Mammary epithelial cell (primary cell): ENCODE measurements at regions of chr4 and their contacts with region 1.

Region 1: DNA sequence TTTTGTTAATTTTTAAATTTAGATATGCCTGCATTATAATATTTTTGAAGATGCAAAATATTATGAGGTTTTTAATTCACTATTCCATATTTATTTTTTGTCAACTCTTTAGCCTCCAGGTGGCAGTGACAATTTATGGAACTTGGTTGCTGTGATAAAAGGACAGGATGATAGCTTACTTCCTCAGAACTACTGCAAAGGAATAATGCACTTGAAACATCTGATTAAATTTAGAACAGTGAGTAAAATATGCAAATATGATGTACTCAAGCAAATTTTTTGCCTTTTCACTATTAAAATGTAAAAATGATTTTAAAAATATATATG is 45.1 kb downstream of the SPATA4 start:
- DNase-seq: peak; percentile 11
- H3K4me3 ChIP-seq: no peak overlapping the region
- H3K27ac ChIP-seq: no peak overlapping the region
- H3K4me1 ChIP-seq: no peaks in the 10 kb centered on the region
- H3K27me3 ChIP-seq: no peaks in the 10 kb centered on the region
- CTCF ChIP-seq: peak in 1 of 2 donors; percentile 52

Region 2: GRCh38 chr4:176065435-176066291 is 84.7 kb before region 1 on chr4 and contains the start of gene WDR17:
- CTCF ChIA-PET with region 1: no interaction called
- dilution Hi-C with region 1: no loop called
- in situ Hi-C with region 1: no loop called
- intact Hi-C with region 1: no loop called
- DNase-seq: peak; percentile 33
- H3K4me3 ChIP-seq: peak within 1 kb of the TSS; percentile 39 to 64 (median 56)
- H3K27ac ChIP-seq: no peak within 1 kb of the TSS
- H3K4me1 ChIP-seq: peaks cover 5% of the 10 kb centered on the region
- H3K27me3 ChIP-seq: no peaks in the 10 kb centered on the region
- CTCF ChIP-seq: no peak
- total RNA-seq, gene WDR17: 0.33 to 0.42 TPM

Region 3: GRCh38 chr4:176226736-176227135 is 76.4 kb after region 1 on chr4:
- CTCF ChIA-PET with region 1: no interaction called
- dilution Hi-C with region 1: no loop called
- in situ Hi-C with region 1: no loop called
- intact Hi-C with region 1: loop called (anchors 2 kb)
- DNase-seq: no peak
- H3K4me3 ChIP-seq: no peak overlapping the region
- H3K27ac ChIP-seq: no peak overlapping the region
- H3K4me1 ChIP-seq: no peaks in the 10 kb centered on the region
- H3K27me3 ChIP-seq: no peaks in the 10 kb centered on the region
- CTCF ChIP-seq: no peak

Region 4: GRCh38 chr4:176436293-176436973 is 286.1 kb after region 1 on chr4:
- CTCF ChIA-PET with region 1: no interaction called
- dilution Hi-C with region 1: no loop called
- in situ Hi-C with region 1: no loop called
- intact Hi-C with region 1: no loop called
- DNase-seq: peak; percentile 98
- H3K4me3 ChIP-seq: no peak overlapping the region
- H3K27ac ChIP-seq: peak overlapping the region; percentile 54
- H3K4me1 ChIP-seq: peaks cover 23% of the 10 kb centered on the region
- H3K27me3 ChIP-seq: no peaks in the 10 kb centered on the region
- CTCF ChIP-seq: no peak